ENCODE measurements at regions of chr3 and their contacts with region 1.

Region 1: GRCh38 chr3:148943506-148944205 is 47.7 kb upstream of the GYG1 start:
- DNase-seq: peak; percentile 87
- H3K4me3 ChIP-seq: no peak overlapping the region
- H3K27ac ChIP-seq: no peak overlapping the region
- H3K4me1 ChIP-seq: no peaks in the 10 kb centered on the region
- H3K27me3 ChIP-seq: no peaks in the 10 kb centered on the region
- CTCF ChIP-seq: peak; percentile 82

Region 2: DNA sequence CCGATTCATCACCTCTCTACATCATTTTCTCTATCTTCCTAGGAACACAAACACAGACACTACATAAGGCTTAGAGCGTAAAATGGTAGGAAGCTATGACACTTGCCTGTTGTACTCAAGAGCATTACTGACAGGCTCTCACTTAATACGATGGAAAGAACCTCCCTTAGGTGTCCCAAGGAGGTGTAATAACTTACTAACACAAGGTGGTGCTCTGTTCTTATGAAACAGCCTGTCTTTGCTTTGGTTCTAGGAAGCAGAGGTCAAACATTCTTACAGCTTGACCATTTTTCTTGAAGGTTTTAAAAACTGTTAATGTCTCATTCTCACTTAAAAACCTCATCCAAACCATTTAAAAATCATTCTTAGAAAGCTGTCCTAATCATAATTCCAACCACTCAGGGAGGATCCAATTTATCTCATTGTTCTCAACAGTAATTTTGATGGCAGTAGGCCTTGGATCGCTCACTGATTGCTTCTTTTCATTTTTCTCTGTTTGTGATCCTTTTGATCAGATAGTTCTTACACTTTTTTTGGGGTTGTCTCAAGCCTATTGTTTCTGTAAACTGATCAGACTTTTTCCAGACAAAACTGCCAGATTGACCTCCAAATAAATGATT is 563.8 kb before region 1 on chr3:
- CTCF ChIA-PET with region 1: interaction called, 3 read pairs
- POLR2A ChIA-PET with region 1: no interaction called
- intact Hi-C with region 1: loop called (anchors 5 kb)
- DNase-seq: peak; percentile 62
- H3K4me3 ChIP-seq: no peak overlapping the region
- H3K27ac ChIP-seq: no peak overlapping the region
- H3K4me1 ChIP-seq: peaks cover 19% of the 10 kb centered on the region
- H3K27me3 ChIP-seq: no peaks in the 10 kb centered on the region
- CTCF ChIP-seq: peak; percentile 49

Region 3: DNA sequence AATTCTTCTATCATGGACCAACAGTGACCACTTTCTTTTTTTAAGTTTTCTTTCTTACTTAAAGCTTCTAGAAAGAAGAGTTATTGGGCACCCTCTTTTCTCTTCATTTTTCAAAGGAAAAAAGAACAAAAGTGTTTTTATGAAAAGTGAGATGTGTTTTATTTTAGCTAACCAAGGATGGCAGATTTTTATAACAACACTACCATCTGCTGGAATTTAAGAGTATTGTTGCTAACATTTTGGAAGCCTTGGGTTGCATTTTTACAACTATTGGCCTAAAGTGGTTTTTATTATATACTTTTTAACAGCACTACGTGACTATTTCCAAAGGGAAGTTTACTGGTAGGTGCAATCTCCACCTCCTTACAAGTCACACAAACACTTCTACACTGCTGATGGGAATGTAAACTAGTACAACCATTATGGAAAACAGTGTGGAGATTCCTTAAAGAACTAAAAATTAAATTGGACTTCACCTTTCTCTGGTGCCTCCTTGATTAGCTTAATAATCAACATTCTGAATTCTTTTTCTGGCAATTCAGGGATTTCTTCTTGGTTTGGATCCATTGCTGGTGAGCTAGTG is 483.6 kb before region 1 on chr3:
- CTCF ChIA-PET with region 1: no interaction called
- POLR2A ChIA-PET with region 1: no interaction called
- intact Hi-C with region 1: loop called (anchors 10 kb)
- DNase-seq: peak; percentile 16
- H3K4me3 ChIP-seq: no peak overlapping the region
- H3K27ac ChIP-seq: no peak overlapping the region
- H3K4me1 ChIP-seq: no peaks in the 10 kb centered on the region
- H3K27me3 ChIP-seq: no peaks in the 10 kb centered on the region
- CTCF ChIP-seq: peak; percentile 51; the same call in 1 of the 2 replicates

Region 4: DNA sequence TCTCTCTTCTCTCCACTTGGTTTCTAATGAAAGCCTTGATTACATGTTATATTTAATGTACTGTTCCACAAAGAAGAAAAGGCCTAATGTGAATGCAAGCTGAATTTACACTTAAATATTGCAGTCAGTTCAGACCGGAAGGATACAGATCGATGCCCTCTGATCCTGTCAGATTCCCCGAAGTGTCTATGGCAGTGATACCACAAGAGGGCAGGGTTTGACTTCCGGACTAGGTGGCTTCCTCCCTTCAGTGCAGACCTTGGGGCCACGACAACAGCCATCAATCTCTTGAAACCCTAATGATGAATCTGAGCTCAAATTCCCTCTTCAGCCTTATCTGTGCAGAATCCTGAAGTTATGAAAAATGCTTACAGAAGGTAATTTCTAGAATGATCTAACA is 216.4 kb before region 1 on chr3:
- CTCF ChIA-PET with region 1: interaction called, 3 read pairs
- POLR2A ChIA-PET with region 1: no interaction called
- intact Hi-C with region 1: loop called (anchors 2 kb)
- DNase-seq: peak; percentile 57
- H3K4me3 ChIP-seq: no peak overlapping the region
- H3K27ac ChIP-seq: no peak overlapping the region
- H3K4me1 ChIP-seq: no peaks in the 10 kb centered on the region
- H3K27me3 ChIP-seq: no peaks in the 10 kb centered on the region
- CTCF ChIP-seq: peak; percentile 54

Region 5: GRCh38 chr3:148861277-148861869 is 82.3 kb before region 1 on chr3:
- CTCF ChIA-PET with region 1: no interaction called
- POLR2A ChIA-PET with region 1: no interaction called
- intact Hi-C with region 1: loop called (anchors 1 kb)
- DNase-seq: peak; percentile 56
- H3K4me3 ChIP-seq: no peak overlapping the region
- H3K27ac ChIP-seq: no peak overlapping the region
- H3K4me1 ChIP-seq: no peaks in the 10 kb centered on the region
- H3K27me3 ChIP-seq: no peaks in the 10 kb centered on the region
- CTCF ChIP-seq: peak; percentile 71

Region 6: GRCh38 chr3:149104516-149104915 is 160.9 kb after region 1 on chr3:
- CTCF ChIA-PET with region 1: interaction called, 10 read pairs
- POLR2A ChIA-PET with region 1: no interaction called
- intact Hi-C with region 1: no loop called
- DNase-seq: no peak
- H3K4me3 ChIP-seq: no peak overlapping the region
- H3K27ac ChIP-seq: no peak overlapping the region
- H3K4me1 ChIP-seq: no peaks in the 10 kb centered on the region
- H3K27me3 ChIP-seq: no peaks in the 10 kb centered on the region
- CTCF ChIP-seq: no peak

Region 7: GRCh38 chr3:149494022-149494758 is 550.5 kb after region 1 on chr3:
- CTCF ChIA-PET with region 1: no interaction called
- POLR2A ChIA-PET with region 1: no interaction called
- intact Hi-C with region 1: no loop called
- DNase-seq: peak; percentile 82
- H3K4me3 ChIP-seq: no peak overlapping the region
- H3K27ac ChIP-seq: no peak overlapping the region
- H3K4me1 ChIP-seq: no peaks in the 10 kb centered on the region
- H3K27me3 ChIP-seq: peaks cover 4% of the 10 kb centered on the region
- CTCF ChIP-seq: peak; percentile 92